Activated CD8-positive, alpha-beta T cell treated with anti-CD3 and anti-CD28 coated beads, Interleukin-2, amount 10 ng/mL, durations not matched to agents 7 days and 5 days (primary cell): ENCODE measurements at regions of chr15 and their contacts with region 1.

Region 1: DNA sequence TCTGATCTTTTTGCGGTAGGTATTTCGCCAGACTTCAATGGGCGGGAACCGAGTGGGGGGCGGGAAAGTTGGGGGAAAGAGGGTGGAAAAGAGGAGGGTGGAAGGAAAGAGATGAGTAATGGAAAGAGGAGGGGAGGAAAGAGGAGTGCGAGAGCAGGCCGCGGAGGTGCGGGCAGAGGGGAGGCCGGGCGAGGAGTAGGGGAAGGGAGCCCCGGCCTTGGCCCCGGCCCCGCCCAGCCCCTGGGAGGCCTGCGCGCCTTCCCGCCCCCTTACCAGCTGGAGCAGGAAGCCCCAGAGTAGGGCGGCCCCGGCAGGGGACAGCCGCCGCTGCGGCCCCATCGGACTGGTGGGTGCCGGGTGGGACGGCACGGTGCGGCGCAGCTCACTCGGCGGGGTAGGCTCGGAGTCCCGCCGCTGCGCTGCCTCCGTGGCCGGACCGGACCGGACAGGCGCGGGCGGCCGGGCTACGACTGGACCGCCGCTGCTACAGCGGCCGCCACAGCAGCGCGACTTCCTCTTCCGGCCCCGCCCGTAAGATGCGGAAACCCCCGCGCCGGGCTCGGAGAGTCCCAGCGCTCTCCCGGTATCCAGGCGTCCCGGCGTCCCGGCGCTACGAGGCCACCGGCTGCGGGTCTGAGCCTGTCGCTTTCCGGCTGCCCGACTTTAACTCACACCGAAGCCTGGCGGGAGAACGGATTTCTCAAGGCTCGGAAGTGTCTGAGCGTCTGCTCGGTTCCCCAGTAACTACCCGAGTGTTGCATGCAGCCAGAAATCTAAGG is at the start of gene SPPL2A:
- DNase-seq: peak; percentile 90
- ATAC-seq: peak; percentile 96
- H3K4me3 Mint-ChIP-seq: peak within 1 kb of the TSS; percentile 92
- H3K27ac Mint-ChIP-seq: peak within 1 kb of the TSS; percentile 97
- H3K4me1 Mint-ChIP-seq: peaks cover 41% of the 10 kb centered on the region
- H3K27me3 Mint-ChIP-seq: no peaks in the 10 kb centered on the region
- total RNA-seq, gene SPPL2A: 77.9 to 83.6 TPM

Region 2: GRCh38 chr15:50686468-50687301 is 78.7 kb before region 1 on chr15 and contains the start of gene TRPM7:
- CTCF ChIA-PET with region 1: no interaction called
- POLR2A ChIA-PET with region 1: interaction called, 11 read pairs
- DNase-seq: peak; percentile 90
- ATAC-seq: peak; percentile 86
- H3K4me3 Mint-ChIP-seq: peak within 1 kb of the TSS; percentile 98
- H3K27ac Mint-ChIP-seq: peak within 1 kb of the TSS; percentile 98
- H3K4me1 Mint-ChIP-seq: peaks cover 44% of the 10 kb centered on the region
- H3K27me3 Mint-ChIP-seq: no peaks in the 10 kb centered on the region
- total RNA-seq, gene TRPM7: 38.0 to 40.2 TPM

Region 3: GRCh38 chr15:50865515-50866353 is 100.3 kb after region 1 on chr15:
- CTCF ChIA-PET with region 1: no interaction called
- POLR2A ChIA-PET with region 1: no interaction called
- DNase-seq: no peak
- ATAC-seq: no peak
- H3K4me3 Mint-ChIP-seq: no peak overlapping the region
- H3K27ac Mint-ChIP-seq: no peak overlapping the region
- H3K4me1 Mint-ChIP-seq: no peaks in the 10 kb centered on the region
- H3K27me3 Mint-ChIP-seq: peaks cover 9% of the 10 kb centered on the region